ENCODE measurements at regions of chr6 and their contacts with region 1.

Region 1: DNA sequence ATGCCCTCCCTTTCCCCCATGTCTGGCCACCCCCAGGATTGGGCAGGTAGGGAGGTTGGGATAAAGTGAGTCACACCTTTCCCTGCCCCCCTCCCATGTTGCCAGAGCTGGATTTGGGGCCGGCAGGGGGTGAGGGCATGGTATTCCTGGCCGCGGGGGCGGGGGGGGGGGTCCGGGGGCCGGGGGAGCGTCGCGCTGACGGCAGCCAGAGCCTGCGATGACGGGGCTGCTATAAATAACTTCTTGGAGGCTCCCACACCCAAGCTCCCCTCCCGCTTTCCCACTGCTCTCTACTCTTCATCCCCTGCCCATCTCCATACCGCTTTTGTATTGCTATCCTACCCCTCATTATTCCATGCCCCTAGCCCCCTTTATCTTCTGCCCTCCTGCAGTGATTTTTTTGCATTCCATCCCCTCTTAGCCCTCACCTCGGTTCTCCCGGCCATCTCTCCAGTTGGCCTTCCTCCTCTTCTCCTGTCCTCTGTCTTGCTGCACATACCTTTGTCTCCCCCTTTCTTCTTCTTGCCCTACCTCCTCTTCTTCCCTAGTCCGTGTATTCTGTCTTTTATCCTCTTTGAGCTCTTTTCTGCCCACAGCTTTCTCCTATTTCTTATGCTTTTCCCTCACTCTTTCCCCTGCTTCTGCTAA is 13.8 kb downstream of the SYNGAP1 start:
- DNase-seq: no peak
- ATAC-seq: no peak
- H3K4me3 ChIP-seq: no peak overlapping the region
- H3K27ac ChIP-seq: no peak overlapping the region
- H3K4me1 ChIP-seq: peaks cover 2% of the 10 kb centered on the region; the same call in 1 of the 2 replicates
- H3K27me3 ChIP-seq: no peaks in the 10 kb centered on the region
- CTCF ChIP-seq: no peak

Region 2: DNA sequence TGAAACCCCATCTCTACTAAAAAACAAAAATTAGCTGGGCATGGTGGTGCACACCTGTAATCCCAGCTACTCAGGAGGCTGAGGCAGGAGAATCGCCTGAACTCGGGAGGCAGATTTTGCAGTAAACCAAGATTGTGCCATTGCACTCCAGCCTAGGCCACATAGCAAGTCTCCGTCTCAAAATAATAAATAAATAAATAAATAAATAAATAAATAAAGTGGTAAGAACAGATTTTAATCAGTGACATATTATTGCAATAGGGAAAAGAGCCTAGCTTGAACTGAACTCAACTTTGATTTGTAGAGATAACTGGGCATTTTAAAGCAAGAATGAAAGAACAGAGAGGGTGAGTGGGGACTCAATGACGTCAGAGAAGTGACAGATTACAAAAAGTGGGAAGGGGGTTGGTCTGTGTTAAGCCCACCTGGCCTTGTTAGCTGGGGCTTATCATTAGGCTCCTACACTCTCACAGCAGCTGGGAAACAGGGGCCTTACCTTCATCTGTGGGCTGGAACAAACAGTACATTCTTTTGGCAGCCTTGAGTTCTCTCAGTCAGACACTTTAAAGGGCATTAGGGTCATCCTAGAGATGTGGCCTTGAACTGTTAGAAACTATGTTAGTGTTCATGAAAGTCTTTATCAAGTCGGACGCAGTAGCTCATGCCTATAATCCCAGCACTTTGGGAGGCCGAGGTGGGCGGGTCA is 66.5 kb before region 1 on chr6:
- CTCF ChIA-PET with region 1: no interaction called
- POLR2A ChIA-PET with region 1: interaction called, 14 read pairs
- intact Hi-C with region 1: no loop called
- DNase-seq: no peak
- ATAC-seq: no peak
- H3K4me3 ChIP-seq: no peak overlapping the region
- H3K27ac ChIP-seq: no peak overlapping the region
- H3K4me1 ChIP-seq: no peaks in the 10 kb centered on the region
- H3K27me3 ChIP-seq: no peaks in the 10 kb centered on the region
- CTCF ChIP-seq: no peak